ENCODE measurements at regions of chr3 and their contacts with region 1.

Region 1: GRCh38 chr3:66378256-66378823 is 122.5 kb downstream of the LRIG1 start:
- DNase-seq: peak; percentile 62
- H3K4me3 Mint-ChIP-seq: no peak overlapping the region
- H3K27ac Mint-ChIP-seq: peak overlapping the region; percentile 83
- H3K4me1 Mint-ChIP-seq: peaks cover 11% of the 10 kb centered on the region
- H3K27me3 Mint-ChIP-seq: no peaks in the 10 kb centered on the region

Region 2: GRCh38 chr3:66276705-66277274 is 101.5 kb before region 1 on chr3:
- CTCF ChIA-PET with region 1: interaction called, 47 read pairs
- POLR2A ChIA-PET with region 1: interaction called, 3 read pairs
- intact Hi-C with region 1: no loop called
- DNase-seq: peak; percentile 68
- H3K4me3 Mint-ChIP-seq: no peak overlapping the region
- H3K27ac Mint-ChIP-seq: peak overlapping the region; percentile 24
- H3K4me1 Mint-ChIP-seq: peaks cover 37% of the 10 kb centered on the region
- H3K27me3 Mint-ChIP-seq: no peaks in the 10 kb centered on the region

Region 3: DNA sequence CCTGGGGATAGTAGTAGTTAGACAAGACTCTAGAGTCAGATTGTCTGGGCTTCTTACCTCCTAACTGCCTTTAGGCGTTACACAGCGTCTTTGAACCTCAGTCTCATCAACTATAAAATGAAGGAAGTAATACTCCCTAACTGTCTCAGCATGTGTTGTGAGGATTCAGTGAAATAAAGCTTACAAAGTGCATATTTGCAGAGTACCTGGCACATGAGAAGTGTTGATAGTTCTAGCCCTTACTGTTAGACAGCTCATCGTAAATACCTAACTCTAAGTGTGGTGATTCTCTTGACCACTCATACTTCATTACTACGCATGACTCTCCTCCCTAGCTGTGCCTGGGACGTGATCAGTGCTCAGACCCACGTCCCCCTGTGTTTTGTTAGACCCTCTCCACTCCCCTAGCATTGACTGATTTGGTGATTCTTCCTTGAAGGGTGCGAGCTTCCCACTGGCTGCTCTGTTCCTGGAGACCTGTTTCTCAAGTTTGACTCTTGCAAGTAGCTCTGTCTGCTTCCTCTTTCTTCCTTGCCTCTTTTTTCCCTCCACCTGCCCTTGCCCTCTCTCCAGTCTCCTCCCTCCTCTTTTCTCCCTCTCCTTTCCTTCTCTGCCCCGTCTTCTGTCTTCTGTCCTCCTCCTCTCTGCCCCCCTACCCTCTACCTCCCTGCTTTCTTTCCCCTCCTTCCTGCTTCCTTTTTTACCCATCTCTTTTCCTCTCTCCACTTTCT is 33.3 kb before region 1 on chr3:
- CTCF ChIA-PET with region 1: interaction called, 16 read pairs
- POLR2A ChIA-PET with region 1: no interaction called
- intact Hi-C with region 1: no loop called
- DNase-seq: no peak
- H3K4me3 Mint-ChIP-seq: no peak overlapping the region
- H3K27ac Mint-ChIP-seq: no peak overlapping the region
- H3K4me1 Mint-ChIP-seq: no peaks in the 10 kb centered on the region
- H3K27me3 Mint-ChIP-seq: no peaks in the 10 kb centered on the region

Region 4: GRCh38 chr3:66362541-66362941 is 15.8 kb before region 1 on chr3:
- CTCF ChIA-PET with region 1: interaction called, 15 read pairs
- POLR2A ChIA-PET with region 1: no interaction called
- intact Hi-C with region 1: no loop called
- DNase-seq: no peak
- H3K4me3 Mint-ChIP-seq: no peak overlapping the region
- H3K27ac Mint-ChIP-seq: no peak overlapping the region
- H3K4me1 Mint-ChIP-seq: no peaks in the 10 kb centered on the region
- H3K27me3 Mint-ChIP-seq: no peaks in the 10 kb centered on the region

Region 5: DNA sequence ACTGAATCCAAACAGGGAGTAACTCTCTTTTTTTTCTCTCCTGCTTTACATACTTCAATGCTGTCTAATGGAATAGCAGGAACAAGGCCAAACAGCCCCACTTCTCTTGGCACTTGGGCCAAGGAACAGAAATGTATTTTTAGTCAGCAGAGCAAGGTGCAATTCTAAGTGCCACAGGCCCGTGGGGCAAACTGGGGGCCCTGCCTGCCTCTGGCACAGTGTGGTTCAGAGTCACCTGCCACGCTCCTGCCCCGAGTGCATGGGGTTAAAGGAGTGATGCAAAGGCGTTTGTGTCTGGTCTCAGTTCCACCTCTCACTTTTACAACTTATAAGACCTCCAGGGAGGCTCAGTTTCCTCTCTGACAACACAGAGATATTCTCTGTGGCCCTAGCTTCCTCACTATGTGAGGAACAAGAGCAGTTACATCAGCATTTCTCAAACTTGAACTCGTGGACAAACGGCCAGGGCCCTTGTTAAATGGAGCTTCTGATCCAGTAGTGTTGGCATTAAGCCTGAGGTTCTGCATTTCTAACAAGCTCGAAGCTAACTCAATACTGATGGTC is 71.2 kb after region 1 on chr3:
- CTCF ChIA-PET with region 1: no interaction called
- POLR2A ChIA-PET with region 1: no interaction called
- intact Hi-C with region 1: no loop called
- DNase-seq: no peak
- H3K4me3 Mint-ChIP-seq: no peak overlapping the region
- H3K27ac Mint-ChIP-seq: no peak overlapping the region
- H3K4me1 Mint-ChIP-seq: peaks cover 11% of the 10 kb centered on the region
- H3K27me3 Mint-ChIP-seq: no peaks in the 10 kb centered on the region

Region 6: GRCh38 chr3:66520724-66521123 is 142.4 kb after region 1 on chr3:
- CTCF ChIA-PET with region 1: no interaction called
- POLR2A ChIA-PET with region 1: no interaction called
- intact Hi-C with region 1: no loop called
- DNase-seq: no peak
- H3K4me3 Mint-ChIP-seq: no peak overlapping the region
- H3K27ac Mint-ChIP-seq: no peak overlapping the region
- H3K4me1 Mint-ChIP-seq: no peaks in the 10 kb centered on the region
- H3K27me3 Mint-ChIP-seq: peaks cover 4% of the 10 kb centered on the region

Region 7: DNA sequence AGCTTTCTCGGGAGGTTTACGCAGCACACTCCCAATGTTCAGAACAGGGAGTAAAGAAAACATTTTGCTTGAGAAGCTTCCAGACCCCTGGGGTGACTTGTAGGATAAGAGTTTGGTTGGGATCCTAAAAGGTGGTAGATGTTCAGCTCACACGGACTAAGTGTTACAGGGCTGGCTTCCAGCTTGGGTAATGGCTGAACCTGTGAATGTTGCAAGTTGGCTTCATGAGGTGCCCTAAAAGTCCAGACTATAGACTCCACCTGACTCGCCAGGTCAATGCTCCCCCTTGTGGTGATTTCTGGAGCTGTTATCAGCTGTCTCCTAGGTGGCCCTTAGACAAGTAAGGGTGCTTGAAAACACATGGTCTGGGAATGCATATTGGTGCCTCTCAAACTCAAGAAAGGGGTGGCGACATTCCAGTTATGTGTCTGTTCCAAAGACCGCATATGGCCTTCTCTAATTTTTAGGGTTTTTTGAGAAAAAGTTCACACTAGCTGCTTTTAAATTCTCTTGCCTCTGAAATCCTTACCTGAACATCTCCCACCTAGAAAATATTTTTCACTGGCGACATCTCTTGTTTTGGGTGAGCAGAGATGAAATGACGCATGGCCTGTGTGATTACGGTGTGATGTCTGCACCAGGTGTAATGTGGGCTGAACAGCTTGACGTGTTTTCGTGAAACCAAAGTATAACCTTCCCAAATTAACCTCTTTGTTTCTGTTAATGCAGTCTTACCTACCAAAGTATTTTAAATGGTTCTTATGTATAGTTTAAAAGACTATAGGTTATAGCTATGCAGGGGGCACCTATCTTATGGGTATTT is 444.1 kb after region 1 on chr3:
- CTCF ChIA-PET with region 1: interaction called, 22 read pairs
- POLR2A ChIA-PET with region 1: no interaction called
- intact Hi-C with region 1: no loop called
- DNase-seq: peak; percentile 76
- H3K4me3 Mint-ChIP-seq: no peak overlapping the region
- H3K27ac Mint-ChIP-seq: no peak overlapping the region
- H3K4me1 Mint-ChIP-seq: no peaks in the 10 kb centered on the region
- H3K27me3 Mint-ChIP-seq: no peaks in the 10 kb centered on the region